ENCODE measurements at regions of chr22 and their contacts with region 1.

Region 1: GRCh38 chr22:23767673-23768548 is at the start of gene CHCHD10:
- DNase-seq: peak; percentile 85 to 95 (median 94)
- ATAC-seq: peak; percentile 79 to 83
- H3K4me3 ChIP-seq: peak within 1 kb of the TSS; percentile 65
- H3K27ac ChIP-seq: peak within 1 kb of the TSS; percentile 90
- H3K4me1 ChIP-seq: no peaks in the 10 kb centered on the region
- H3K27me3 ChIP-seq: no peaks in the 10 kb centered on the region
- total RNA-seq, gene CHCHD10: 993 to 1,434 (median 1,175) TPM

Region 2: DNA sequence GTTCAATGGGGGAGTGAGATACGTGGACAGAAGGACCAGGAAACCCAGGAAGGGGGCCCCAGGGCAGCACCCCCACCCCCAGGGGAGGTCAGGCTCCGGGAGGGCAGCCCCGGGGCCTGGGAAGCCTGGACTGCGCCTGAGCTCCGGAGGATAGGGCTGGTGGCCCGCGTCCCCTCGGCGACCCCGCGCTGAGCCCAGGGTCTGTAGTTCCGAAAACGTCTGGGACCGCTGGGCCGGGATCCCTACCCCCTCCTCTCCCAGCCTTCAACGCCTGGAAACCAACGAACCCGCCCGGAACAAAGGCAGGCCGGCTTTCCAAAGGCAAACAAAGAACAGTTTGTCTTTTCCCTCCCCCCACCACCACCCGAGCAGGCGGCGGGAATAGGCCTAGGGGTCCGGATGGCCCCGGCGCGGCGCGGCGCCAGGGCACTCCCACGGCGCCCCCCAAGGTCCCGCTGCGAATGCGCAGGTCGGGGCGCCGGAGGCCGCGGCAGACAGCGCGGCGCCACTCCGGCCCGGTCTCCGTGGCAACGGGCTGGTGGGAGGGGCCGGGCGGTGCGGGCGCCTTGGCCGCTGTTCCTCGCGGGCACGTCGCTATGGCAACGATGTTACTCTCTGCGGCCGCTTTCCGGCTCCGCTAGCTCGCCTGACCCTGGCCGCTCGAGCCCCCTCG is 246.3 kb before region 1 on chr22:
- intact Hi-C with region 1: loop called in 1 of 4 experiments (anchors 10 kb)
- DNase-seq: peak; percentile 92 to 97 (median 97)
- ATAC-seq: peak; percentile 89 to 93
- H3K4me3 ChIP-seq: peak overlapping the region; percentile 30
- H3K27ac ChIP-seq: peak overlapping the region; percentile 96
- H3K4me1 ChIP-seq: no peaks in the 10 kb centered on the region
- H3K27me3 ChIP-seq: no peaks in the 10 kb centered on the region

Region 3: GRCh38 chr22:23838681-23839468 is 71.0 kb after region 1 on chr22 and contains the start of gene DERL3:
- intact Hi-C with region 1: no loop called
- DNase-seq: peak; percentile 98 to 99 (median 99)
- ATAC-seq: peak; percentile 85 to 91
- H3K4me3 ChIP-seq: peak within 1 kb of the TSS; percentile 6
- H3K27ac ChIP-seq: no peak within 1 kb of the TSS
- H3K4me1 ChIP-seq: peaks cover 4% of the 10 kb centered on the region
- H3K27me3 ChIP-seq: no peaks in the 10 kb centered on the region
- total RNA-seq, gene DERL3: 6.1 to 11.6 (median 9.2) TPM

Region 4: DNA sequence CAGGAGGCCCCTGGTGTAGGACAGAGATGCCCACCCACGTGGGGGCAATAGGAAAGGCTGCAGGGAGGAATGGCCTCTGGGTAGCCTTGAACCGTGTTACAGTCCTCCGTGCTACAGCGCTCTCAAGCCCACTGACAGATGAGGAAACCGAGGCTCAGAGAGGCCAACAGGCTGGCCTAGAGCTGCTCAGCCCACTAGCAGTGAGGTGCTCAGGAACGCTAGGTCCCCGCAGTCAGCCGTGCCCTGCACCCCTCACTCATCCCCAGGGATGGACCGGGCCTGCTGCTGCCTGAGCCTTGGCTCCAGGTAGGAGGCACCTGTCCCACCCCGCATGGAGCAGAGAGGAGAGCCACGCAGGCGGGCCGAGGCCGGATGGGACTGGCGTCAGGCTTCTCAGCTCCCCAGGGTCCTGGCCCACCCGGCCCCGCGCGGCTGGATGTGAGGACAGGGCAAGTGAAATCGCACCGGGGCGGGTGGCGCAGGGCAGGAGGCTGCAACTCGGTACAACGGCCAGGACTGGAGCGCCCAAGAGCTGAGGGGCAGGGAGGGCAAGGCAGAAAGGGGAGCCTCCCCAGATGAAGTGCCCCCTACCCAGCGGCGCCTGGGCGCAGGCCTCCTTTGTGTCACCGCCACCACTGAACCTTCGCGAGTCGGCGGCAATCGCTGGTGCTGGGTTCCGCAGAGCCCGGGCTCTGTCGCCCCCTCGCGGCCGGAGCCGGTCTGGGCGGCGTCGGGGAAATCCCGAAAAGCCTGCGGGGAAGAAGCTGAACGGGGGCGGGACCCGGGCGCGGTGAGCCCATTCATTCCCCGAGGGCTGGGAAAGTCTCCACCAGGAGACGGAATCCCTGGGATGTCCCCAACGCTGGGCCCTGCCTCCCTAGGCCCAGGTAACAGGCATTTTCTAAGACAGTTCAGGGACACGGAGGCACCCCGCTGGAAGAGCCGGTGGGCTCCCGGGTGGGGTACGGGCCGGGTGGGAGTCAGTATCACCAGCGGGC is 81.4 kb after region 1 on chr22:
- intact Hi-C with region 1: loop called (anchors 5 kb)
- DNase-seq: peak; percentile 79 to 94 (median 94)
- ATAC-seq: peak; percentile 67 to 78
- H3K4me3 ChIP-seq: no peak overlapping the region
- H3K27ac ChIP-seq: no peak overlapping the region
- H3K4me1 ChIP-seq: no peaks in the 10 kb centered on the region
- H3K27me3 ChIP-seq: no peaks in the 10 kb centered on the region

Measured in right cardiac atrium (tissue), 5 donors.